ENCODE measurements at regions of chr7 and their contacts with region 1.

Region 1: DNA sequence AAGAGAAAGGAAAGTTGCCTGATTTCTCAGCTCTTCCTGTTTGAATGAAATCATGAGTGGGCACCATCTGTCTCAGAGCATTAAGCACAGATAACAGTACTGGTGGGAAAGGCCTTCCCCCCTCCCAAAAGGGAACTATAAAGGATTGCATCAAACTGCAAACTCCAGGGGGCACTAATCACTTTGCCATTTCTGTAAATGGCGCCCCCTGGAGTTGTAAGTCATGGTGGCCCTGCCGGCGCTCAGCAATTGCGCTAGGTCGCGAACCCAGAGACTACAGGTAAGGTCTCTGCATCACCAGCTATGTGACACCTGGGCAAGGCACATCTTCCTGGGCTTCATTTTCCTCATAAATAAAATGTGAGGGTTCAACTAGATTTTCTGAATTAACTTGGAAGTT is 11.1 kb downstream of the LRRC4 start:
- DNase-seq: no peak
- ATAC-seq: no peak
- H3K4me3 ChIP-seq: no peak overlapping the region
- H3K27ac ChIP-seq: no peak overlapping the region
- H3K4me1 ChIP-seq: peaks cover 6% of the 10 kb centered on the region
- H3K27me3 ChIP-seq: no peaks in the 10 kb centered on the region
- CTCF ChIP-seq: no peak

Region 2: GRCh38 chr7:127995156-127995880 is 24.8 kb before region 1 on chr7:
- intact Hi-C with region 1: loop called in 1 of 2 experiments (anchors 1 kb)
- DNase-seq: no peak
- ATAC-seq: peak; percentile 76 to 87 (median 83)
- H3K4me3 ChIP-seq: no peak overlapping the region
- H3K27ac ChIP-seq: peak overlapping the region; percentile 71
- H3K4me1 ChIP-seq: peaks cover 18% of the 10 kb centered on the region
- H3K27me3 ChIP-seq: no peaks in the 10 kb centered on the region
- CTCF ChIP-seq: no peak

Measured in psoas muscle (tissue), 8 donors.